AG04450 (cell line): ENCODE measurements at regions of chr1 and their contacts with region 1.

Region 1: DNA sequence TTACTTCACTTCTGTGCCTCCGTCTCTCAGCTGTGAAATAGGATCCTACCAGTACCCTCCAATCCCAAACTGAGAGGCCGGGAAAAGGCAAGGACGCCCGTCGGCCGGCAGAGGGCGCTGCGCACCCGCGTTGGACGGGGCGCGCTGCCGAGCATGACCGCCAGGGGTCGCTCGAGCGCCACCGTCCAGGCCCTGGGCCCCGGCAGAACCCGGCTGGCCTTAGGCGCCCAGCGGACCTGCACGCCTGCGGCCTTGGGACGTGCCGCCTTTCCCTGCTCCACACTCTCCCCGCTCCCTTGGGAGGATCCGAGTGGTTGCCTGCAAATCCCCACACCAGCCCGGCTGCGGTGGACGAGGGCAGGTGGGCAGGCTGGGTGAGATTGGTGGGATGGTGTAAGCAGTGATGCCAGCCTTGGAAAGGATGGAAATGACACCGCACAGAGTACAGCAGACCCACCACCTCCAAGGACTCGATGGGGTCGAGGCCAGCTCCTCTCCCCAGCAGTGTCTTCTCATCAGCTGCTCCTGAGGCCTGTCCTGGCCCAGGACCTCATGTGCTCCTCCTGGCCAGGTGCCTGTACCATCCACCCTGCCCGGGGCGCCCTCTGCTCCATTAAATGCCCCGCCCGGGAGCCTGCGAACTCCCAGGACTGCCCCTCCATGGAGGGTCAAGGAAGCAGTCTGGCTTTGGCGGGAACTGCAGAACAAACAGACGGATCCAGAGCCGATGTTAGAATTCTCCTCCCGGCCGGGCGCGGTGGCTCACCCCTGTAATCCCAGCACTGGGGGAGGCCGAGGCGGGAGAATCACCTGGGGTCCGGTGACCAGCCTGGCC is 47.4 kb upstream of the LBR start:
- DNase-seq: peak; percentile 33
- H3K4me3 ChIP-seq: peak overlapping the region; percentile 27; the same call in 1 of the 2 replicates
- H3K27ac ChIP-seq: no peak overlapping the region
- H3K27me3 ChIP-seq: no peaks in the 10 kb centered on the region
- CTCF ChIP-seq: peak; percentile 100

Region 2: GRCh38 chr1:225772323-225772768 is 297.1 kb after region 1 on chr1:
- CTCF ChIA-PET with region 1: interaction called, 102 read pairs
- POLR2A ChIA-PET with region 1: interaction called, 4 read pairs
- DNase-seq: peak; percentile 82
- H3K4me3 ChIP-seq: no peak overlapping the region
- H3K27ac ChIP-seq: no peak overlapping the region
- H3K27me3 ChIP-seq: no peaks in the 10 kb centered on the region
- CTCF ChIP-seq: peak; percentile 92

Region 3: GRCh38 chr1:225809842-225810578 is 334.8 kb after region 1 on chr1 and contains the start of gene EPHX1:
- CTCF ChIA-PET with region 1: interaction called, 11 read pairs
- POLR2A ChIA-PET with region 1: no interaction called
- DNase-seq: peak; percentile 61
- H3K4me3 ChIP-seq: peak within 1 kb of the TSS; percentile 81
- H3K27ac ChIP-seq: peak within 1 kb of the TSS; percentile 39
- H3K27me3 ChIP-seq: no peaks in the 10 kb centered on the region
- CTCF ChIP-seq: peak; percentile 42
- polyA plus RNA-seq, gene EPHX1: 41.3 and 48.5 TPM in 2 replicates

Region 4: GRCh38 chr1:225881969-225882693 is 406.9 kb after region 1 on chr1 and contains the start of gene TMEM63A:
- CTCF ChIA-PET with region 1: interaction called, 15 read pairs
- POLR2A ChIA-PET with region 1: no interaction called
- DNase-seq: peak; percentile 52
- H3K4me3 ChIP-seq: peak within 1 kb of the TSS; percentile 89
- H3K27ac ChIP-seq: peak within 1 kb of the TSS; percentile 31
- H3K27me3 ChIP-seq: no peaks in the 10 kb centered on the region
- CTCF ChIP-seq: peak; percentile 19; the same call in 1 of the 2 replicates
- polyA plus RNA-seq, gene TMEM63A: 16.8 and 17.1 TPM in 2 replicates

Region 5: GRCh38 chr1:225962440-225962975 is 487.3 kb after region 1 on chr1:
- CTCF ChIA-PET with region 1: interaction called, 10 read pairs
- POLR2A ChIA-PET with region 1: no interaction called
- DNase-seq: no peak
- H3K4me3 ChIP-seq: no peak overlapping the region
- H3K27ac ChIP-seq: no peak overlapping the region
- H3K27me3 ChIP-seq: peaks cover 8% of the 10 kb centered on the region
- CTCF ChIP-seq: peak; percentile 57

Region 6: GRCh38 chr1:225987491-225988316 is 512.5 kb after region 1 on chr1:
- CTCF ChIA-PET with region 1: interaction called, 23 read pairs
- POLR2A ChIA-PET with region 1: no interaction called
- DNase-seq: peak; percentile 20
- H3K4me3 ChIP-seq: no peak overlapping the region
- H3K27ac ChIP-seq: no peak overlapping the region
- H3K27me3 ChIP-seq: no peaks in the 10 kb centered on the region
- CTCF ChIP-seq: peak; percentile 79